ENCODE measurements at regions of chr12 and their contacts with region 1.

Region 1: DNA sequence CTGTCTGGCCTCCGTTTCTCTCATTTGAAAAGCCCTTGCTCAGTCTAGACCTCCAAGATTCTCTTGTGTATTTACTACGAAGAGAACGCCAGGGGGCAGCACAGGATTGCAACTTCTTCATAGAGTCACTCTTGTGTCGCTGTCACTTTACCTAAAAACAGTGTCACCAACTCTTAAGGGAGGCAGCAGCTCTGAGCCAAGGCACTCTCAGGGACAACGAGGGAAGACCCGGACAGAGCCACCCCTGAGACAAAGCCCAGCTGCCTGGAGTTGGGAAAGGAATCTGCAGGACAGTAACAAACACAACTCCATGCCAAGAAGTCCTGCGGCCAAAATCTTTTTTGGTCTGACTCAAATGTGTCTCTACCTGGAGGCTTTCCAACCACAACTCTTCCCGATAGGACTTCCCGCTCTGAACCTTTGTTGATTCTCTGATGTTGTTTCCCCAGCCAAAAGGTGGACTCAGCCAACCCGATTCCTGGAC is 9.6 kb upstream of the RPAP3 start:
- H3K4me3 ChIP-seq: no peak overlapping the region
- H3K27ac ChIP-seq: no peak overlapping the region
- H3K4me1 ChIP-seq: peaks cover 5% of the 10 kb centered on the region
- CTCF ChIP-seq: peak; percentile 69

Region 2: GRCh38 chr12:47527816-47528215 is 187.6 kb before region 1 on chr12:
- CTCF ChIA-PET with region 1: no interaction called
- POLR2A ChIA-PET with region 1: no interaction called
- H3K4me3 ChIP-seq: no peak overlapping the region
- H3K27ac ChIP-seq: no peak overlapping the region
- H3K4me1 ChIP-seq: no peaks in the 10 kb centered on the region
- CTCF ChIP-seq: no peak

Region 3: DNA sequence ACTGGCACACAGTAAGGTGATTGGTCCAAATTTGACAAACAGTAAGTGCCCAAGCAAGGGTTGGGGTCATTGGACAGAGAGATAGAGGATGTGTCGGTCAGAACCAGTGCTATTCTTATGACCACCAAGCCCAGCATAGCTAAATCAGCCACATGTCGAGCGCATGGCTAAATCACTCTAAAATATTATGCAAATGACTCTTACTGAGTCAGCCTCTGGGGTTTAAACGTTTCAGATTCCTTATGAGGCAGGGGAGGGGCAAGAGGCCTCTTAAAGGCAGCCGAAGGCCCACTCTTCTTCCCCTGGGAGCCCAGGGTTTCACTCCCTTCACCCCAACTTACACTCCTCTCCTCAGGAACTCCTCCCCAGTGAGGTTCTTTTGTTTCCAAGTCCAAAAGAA is 10.5 kb after region 1 on chr12:
- CTCF ChIA-PET with region 1: interaction called, 50 read pairs
- POLR2A ChIA-PET with region 1: no interaction called
- H3K4me3 ChIP-seq: no peak overlapping the region
- H3K27ac ChIP-seq: no peak overlapping the region
- H3K4me1 ChIP-seq: no peaks in the 10 kb centered on the region
- CTCF ChIP-seq: no peak

Region 4: DNA sequence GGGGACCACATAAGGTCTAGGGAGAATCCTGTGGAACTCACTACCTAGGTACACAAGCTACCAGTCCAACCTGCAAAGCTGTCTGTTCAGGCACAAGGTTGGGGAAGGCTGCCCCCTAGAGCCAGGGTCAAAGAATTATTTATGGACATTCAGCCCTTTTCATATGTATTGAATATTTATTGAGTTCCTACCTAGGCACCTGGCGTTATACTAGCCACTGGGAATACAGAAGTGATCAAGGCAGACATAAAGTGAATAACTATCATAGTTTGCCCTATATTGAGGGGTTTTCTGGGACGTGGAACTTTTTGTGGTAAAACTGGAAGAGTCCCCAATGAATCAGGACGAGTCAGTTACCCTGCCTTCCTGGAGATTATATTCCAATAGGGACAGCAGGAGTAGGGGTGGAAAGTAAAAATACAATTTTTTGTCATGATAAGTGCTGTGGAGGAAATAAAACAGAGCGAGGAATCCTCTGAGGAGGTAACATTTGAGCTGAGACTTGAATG is 51.8 kb after region 1 on chr12:
- CTCF ChIA-PET with region 1: interaction called, 111 read pairs
- POLR2A ChIA-PET with region 1: no interaction called
- H3K4me3 ChIP-seq: no peak overlapping the region
- H3K27ac ChIP-seq: no peak overlapping the region
- H3K4me1 ChIP-seq: no peaks in the 10 kb centered on the region; the same call in 1 of the 2 replicates
- CTCF ChIP-seq: 0 out of 2 replicates have a peak, but pooled peaks have one; percentile 18

Region 5: DNA sequence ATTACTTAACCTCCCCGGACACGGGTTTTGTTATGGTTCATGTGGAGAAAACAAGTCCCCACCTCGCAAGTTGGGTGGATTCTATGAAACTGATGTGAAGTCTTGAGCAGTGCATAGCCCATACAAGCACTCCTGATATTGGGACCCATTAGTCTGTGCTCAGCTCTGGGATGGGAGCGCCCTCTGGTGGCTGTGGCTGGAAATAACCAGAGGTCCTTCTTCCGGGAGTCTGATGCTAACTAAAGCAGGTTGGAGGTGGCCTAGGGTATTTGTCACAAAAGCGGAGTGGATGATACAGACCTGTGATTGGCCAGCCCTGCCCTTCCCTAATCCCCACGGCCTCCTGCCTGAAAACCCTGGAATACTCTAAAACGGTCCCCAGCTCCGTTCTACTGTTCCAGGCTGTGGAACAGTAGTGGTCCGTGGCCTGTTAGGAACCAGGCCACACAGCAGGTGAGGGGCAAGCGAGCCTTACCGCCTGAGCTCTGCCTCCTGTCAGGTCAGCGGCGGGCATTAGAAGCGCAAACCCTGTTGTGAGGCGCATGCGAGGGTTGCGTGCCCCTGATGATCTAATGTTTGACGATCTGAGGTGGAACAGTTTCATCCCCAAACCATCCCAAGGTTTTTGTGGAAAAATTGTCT is 64.0 kb after region 1 on chr12:
- CTCF ChIA-PET with region 1: interaction called, 181 read pairs
- POLR2A ChIA-PET with region 1: interaction called, 6 read pairs
- H3K4me3 ChIP-seq: no peak overlapping the region
- H3K27ac ChIP-seq: no peak overlapping the region
- H3K4me1 ChIP-seq: no peaks in the 10 kb centered on the region; the same call in 1 of the 2 replicates
- CTCF ChIP-seq: peak; percentile 90

Region 6: GRCh38 chr12:47819896-47820630 is 104.6 kb after region 1 on chr12 and contains the start of gene HDAC7:
- CTCF ChIA-PET with region 1: interaction called, 13 read pairs
- POLR2A ChIA-PET with region 1: no interaction called
- H3K4me3 ChIP-seq: peak within 1 kb of the TSS; percentile 67
- H3K27ac ChIP-seq: peak within 1 kb of the TSS; percentile 89
- H3K4me1 ChIP-seq: peaks cover 3% of the 10 kb centered on the region; the same call in 1 of the 2 replicates
- CTCF ChIP-seq: no peak; the same call in 1 of the 2 replicates

Measured in HEK293 (cell line).